Dorsolateral prefrontal cortex (tissue), 120 donors: ENCODE measurements at regions of chr15 and their contacts with region 1.

Region 1: DNA sequence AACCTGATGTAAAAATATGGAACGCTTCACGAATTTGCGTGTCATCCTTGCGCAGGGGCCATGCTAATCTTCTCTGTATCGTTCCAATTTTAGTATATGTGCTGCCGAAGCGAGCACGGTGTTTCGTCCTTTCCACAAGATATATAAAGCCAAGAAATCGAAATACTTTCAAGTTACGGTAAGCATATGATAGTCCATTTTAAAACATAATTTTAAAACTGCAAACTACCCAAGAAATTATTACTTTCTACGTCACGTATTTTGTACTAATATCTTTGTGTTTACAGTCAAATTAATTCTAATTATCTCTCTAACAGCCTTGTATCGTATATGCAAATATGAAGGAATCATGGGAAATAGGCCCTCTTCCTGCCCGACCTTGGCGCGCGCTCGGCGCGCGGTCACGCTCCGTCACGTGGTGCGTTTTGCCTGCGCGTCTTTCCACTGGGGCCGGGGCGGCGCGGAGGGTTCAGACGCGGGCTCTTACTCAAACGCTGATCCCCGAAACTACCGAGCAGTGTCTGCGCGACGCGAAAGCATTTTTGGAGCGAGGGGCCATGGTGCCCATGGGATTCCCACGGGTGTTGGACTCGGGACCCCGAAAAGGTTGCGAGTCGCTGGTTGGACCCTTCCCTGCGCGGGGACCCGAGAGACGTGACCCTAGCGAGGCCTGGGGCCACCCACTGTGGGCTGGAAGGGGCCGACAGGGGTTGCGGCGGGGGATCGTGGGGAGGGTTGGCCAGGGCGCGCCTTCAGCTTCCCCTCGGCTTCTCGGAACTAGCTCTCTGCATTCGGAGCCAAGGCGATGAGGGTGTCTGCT is at the start of gene RNU6-1:
- DNase-seq: peak; percentile 89 to 96 (median 95)
- H3K4me3 ChIP-seq: peak within 1 kb of the TSS; percentile 64 to 100 (median 93)
- H3K27ac ChIP-seq: peak within 1 kb of the TSS; percentile 70 to 99 (median 96)
- H3K27me3 ChIP-seq: peaks cover 0 to 11% (median 7%) of the 10 kb centered on the region in 45 donors
- CTCF ChIP-seq: peak in 16 of 56 donors; percentile 5 to 38 (median 22)
- total RNA-seq, gene RNU6-1: not detected

Region 2: DNA sequence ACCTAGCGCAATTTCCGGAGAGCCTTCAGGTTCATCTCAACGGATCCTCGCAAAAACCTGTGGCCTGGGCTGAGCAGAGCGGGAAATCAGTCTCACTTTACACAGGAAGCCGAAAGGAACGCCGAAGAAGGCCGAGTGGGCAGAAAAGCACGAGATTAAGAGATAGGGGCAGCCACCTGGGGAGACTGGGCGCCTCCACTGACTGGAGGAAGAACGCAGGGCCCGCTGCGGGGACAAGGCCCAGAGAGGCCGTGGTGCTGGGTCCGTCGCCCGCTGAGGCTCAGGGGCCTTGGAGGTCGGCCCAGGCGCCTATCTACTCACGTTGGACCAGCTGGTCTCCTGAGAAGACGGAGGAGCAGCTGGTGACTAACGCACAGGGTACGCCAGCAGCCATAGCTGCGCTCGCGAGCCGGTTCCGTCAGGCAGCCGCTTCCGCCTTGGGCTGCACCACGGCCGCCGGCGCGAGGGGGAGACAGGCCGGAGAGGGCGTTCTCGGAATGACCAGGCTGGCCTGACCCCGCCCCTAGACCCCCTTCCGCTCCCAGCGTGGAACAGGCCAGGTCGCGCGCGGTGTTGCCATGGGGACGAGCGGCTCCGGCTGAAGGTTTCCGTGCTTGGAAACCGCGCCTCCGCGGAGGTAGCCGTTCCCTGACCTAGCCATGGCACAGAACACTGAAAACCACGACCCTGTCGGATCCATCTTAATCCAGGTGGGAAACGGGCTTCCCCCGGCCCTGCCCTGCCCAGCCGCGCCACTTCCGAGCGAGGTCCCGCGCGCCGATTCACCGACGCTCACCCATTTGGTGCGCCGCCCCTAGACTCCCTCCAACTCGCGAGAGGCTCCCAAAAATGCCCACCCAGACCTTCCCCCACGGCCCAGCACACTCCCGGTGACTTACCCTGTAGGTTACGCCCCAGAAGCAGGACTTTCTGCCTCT is 585.6 kb before region 1 on chr15 and contains the starts of genes AAGAB and IQCH:
- intact Hi-C with region 1: loop called in 1 of 2 experiments (anchors 10 kb)
- DNase-seq: peak; percentile 91 to 99 (median 94)
- H3K4me3 ChIP-seq: peak within 1 kb of the TSS; percentile 59 to 100 (median 92)
- H3K27ac ChIP-seq: peak within 1 kb of the TSS in 53 of 59 donors; percentile 24 to 89 (median 71)
- H3K27me3 ChIP-seq: no peaks in the 10 kb centered on the region
- CTCF ChIP-seq: peak in 35 of 56 donors; percentile 7 to 53 (median 28)
- total RNA-seq, gene AAGAB: 33.8 to 77.3 (median 59.0) TPM
- total RNA-seq, gene IQCH: 1.7 to 10.8 (median 5.0) TPM

Region 3: DNA sequence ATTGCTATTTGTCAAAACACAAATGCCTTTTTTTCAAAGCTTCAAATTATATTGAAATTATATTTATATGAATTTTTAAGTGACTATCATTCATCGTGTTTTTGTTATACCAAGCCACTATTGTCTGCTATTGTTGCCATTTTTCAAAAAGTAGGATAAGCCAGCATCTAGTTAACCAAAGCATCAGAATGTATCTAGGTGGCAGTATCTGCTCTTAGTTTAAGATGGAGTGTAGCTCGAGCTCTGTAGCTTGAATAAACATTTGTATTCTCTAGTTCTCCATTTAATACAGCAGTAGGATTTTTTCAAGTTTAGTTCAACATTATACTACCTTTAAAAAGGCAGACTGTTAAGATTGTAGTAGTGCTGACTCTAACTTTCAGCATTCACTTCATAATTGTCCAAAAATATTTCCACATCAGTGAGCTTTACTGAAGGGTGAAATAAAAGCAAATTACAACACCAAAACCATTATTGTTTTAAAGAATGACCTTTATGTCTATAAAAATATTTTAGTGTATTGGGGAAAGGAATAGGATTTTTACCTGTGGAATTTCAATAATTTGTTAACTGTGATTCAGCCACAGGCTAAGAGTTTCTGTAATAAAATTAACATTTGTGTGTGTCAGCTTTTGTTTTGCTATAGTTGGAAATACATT is 338.8 kb before region 1 on chr15:
- intact Hi-C with region 1: loop called in 1 of 2 experiments (anchors 2 kb)
- DNase-seq: no peak
- H3K4me3 ChIP-seq: peak overlapping the region in 48 of 59 donors; percentile 0 to 59 (median 30)
- H3K27ac ChIP-seq: no peak overlapping the region
- H3K27me3 ChIP-seq: no peaks in the 10 kb centered on the region
- CTCF ChIP-seq: peak in 55 of 56 donors; percentile 32 to 75 (median 51)

Region 4: GRCh38 chr15:67542420-67543347 is 297.5 kb before region 1 on chr15 and contains the start of gene MAP2K5:
- intact Hi-C with region 1: loop called (anchors 2 to 5 kb)
- DNase-seq: peak; percentile 76 to 93 (median 89)
- H3K4me3 ChIP-seq: peak within 1 kb of the TSS; percentile 56 to 98 (median 90)
- H3K27ac ChIP-seq: peak within 1 kb of the TSS; percentile 37 to 95 (median 89)
- H3K27me3 ChIP-seq: no peaks in the 10 kb centered on the region
- CTCF ChIP-seq: peak in 22 of 56 donors; percentile 6 to 42 (median 28)
- total RNA-seq, gene MAP2K5: 31.3 to 69.6 (median 47.1) TPM

Region 5: GRCh38 chr15:67685008-67685599 is 155.0 kb before region 1 on chr15:
- intact Hi-C with region 1: no loop called
- DNase-seq: no peak
- H3K4me3 ChIP-seq: no peak overlapping the region
- H3K27ac ChIP-seq: no peak overlapping the region
- H3K27me3 ChIP-seq: no peaks in the 10 kb centered on the region
- CTCF ChIP-seq: no peak